Left colon (tissue), 2 donors: ENCODE measurements at regions of chr21 and their contacts with region 1.

Region 1: GRCh38 chr21:38811257-38811656 is 5.5 kb downstream of the ETS2 start:
- DNase-seq: peak in 1 of 2 donors; percentile 10
- ATAC-seq: no peak

Region 2: GRCh38 chr21:38989745-38990423 is 178.6 kb after region 1 on chr21:
- intact Hi-C with region 1: loop called in 1 of 2 experiments (anchors 10 kb)
- DNase-seq: peak in 1 of 2 donors; percentile 52
- ATAC-seq: peak; percentile 54